ENCODE measurements at regions of chr16 and their contacts with region 1.

Region 1: GRCh38 chr16:82016263-82016662 is 5.0 kb upstream of the SDR42E1 start:
- DNase-seq: no peak
- H3K4me3 ChIP-seq: no peak overlapping the region
- H3K27ac ChIP-seq: no peak overlapping the region
- H3K4me1 ChIP-seq: no peaks in the 10 kb centered on the region
- H3K27me3 ChIP-seq: no peaks in the 10 kb centered on the region; a peak in 2 of 7 replicates
- CTCF ChIP-seq: peak in 2 of 3 experiments; percentile 27 to 43; a peak in 2 of 4 replicates
- EP300 ChIP-seq: no peak
- POLR2A ChIP-seq: no peak
- RAD21 ChIP-seq: peak in 1 of 2 experiments; percentile 30; a peak in 2 of 4 replicates

Region 2: DNA sequence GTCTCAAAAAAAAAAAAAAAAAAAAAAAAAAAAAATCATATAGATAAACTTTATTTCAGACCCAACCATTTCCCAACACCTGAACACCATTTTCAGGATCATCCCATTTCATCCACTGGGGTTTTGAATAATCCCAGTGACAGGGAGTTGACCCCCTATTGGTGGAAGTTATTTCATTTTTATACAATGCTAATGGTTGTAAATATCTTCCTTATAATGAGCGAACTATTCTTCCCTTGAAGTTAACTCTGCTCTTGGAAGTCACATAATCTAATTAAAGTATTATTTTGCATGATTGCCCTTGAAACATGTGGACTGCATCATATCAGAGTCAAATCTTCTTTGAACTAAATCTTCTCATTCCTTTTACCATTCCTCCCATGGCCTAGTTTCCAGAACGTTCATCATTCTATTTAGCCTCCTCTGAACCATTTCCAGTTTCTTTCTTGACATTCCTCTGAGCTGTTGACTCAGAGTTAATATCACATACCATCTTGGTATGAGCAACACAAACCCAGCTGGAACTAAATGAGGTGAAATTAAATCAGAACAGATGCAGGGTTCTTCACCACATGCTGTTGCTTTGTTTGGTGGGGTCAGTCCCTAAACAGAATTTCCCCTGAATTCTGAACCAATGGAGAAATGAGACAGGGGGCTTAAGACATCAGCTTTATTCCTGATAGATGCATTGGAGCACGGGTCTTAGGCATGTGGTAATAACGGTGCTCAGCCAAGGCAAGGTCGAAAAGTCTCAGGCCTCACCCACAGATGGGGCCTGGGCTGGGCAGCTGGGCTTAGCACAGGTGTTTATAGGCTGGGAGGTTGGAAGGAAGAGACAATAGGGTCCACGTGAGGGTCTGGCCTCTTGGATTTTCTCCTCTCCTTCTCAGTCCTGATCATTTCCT is 27.7 kb after region 1 on chr16:
- CTCF ChIA-PET with region 1: interaction called, 10 read pairs
- POLR2A ChIA-PET with region 1: no interaction called
- DNase-seq: no peak
- H3K4me3 ChIP-seq: no peak overlapping the region
- H3K27ac ChIP-seq: no peak overlapping the region
- H3K4me1 ChIP-seq: no peaks in the 10 kb centered on the region
- H3K27me3 ChIP-seq: no peaks in the 10 kb centered on the region
- CTCF ChIP-seq: no peak
- EP300 ChIP-seq: no peak
- POLR2A ChIP-seq: no peak
- RAD21 ChIP-seq: no peak

Measured in H1 (cell line).